AG04449 (cell line): ENCODE measurements at regions of chr3 and their contacts with region 1.

Region 1: DNA sequence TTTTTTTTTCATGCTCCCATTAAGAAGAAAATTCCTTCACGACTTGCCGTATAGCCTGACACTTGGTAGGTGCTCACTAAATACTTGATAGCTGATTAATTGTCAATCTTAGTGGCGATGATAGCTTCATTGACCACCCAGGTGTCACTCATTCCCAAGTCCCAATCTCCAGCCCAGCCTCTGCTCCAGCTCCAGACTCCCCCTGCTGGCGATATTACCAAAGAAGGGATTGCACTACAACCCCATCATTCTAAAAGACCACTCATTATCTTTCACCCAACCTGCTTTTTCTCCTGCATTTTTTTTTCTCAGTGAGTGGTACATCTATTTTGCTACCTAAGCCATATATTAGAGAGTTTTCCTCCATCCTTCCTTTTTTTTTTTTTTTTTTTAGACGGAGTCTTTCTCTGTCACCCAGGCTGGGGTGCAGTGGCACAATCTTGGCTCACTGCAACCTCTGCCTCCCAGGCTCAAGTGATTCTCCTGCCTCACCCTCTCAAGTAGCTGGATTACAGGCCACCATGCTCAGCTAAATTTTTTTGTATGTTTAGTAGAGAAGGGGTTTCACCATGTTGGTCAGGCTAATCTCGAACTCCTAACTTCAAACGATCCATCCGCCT is 19.5 kb upstream of the COMMD2 start:
- DNase-seq: no peak
- H3K4me3 ChIP-seq: no peak overlapping the region
- CTCF ChIP-seq: peak; percentile 72

Region 2: GRCh38 chr3:149104516-149104915 is 667.2 kb before region 1 on chr3:
- CTCF ChIA-PET with region 1: no interaction called
- POLR2A ChIA-PET with region 1: no interaction called
- DNase-seq: no peak
- H3K4me3 ChIP-seq: no peak overlapping the region
- CTCF ChIP-seq: no peak

Region 3: GRCh38 chr3:149487598-149488197 is 284.1 kb before region 1 on chr3:
- CTCF ChIA-PET with region 1: interaction called, 22 read pairs
- POLR2A ChIA-PET with region 1: no interaction called
- DNase-seq: no peak
- H3K4me3 ChIP-seq: no peak overlapping the region
- CTCF ChIP-seq: no peak

Region 4: DNA sequence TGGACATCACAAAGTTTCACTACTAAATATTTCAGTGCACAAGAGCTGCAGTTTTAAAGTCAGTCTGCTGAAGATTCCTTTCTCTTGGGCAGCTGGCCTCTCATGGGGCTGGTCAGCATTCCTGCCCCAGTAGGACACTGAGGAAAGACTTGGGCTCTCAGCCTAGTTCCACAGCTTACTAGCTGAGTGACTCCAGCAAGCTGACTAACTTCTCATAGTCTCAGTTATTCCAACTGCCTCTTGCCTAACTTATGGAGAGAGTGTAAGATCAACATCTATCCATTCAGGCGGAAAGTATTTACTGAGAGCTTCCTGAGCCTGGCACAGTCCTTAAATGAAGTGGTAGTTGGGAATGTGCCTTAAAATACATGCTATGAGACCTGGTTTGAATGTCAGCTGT is 270.2 kb before region 1 on chr3:
- CTCF ChIA-PET with region 1: interaction called, 14 read pairs
- POLR2A ChIA-PET with region 1: no interaction called
- DNase-seq: peak; percentile 89
- H3K4me3 ChIP-seq: no peak overlapping the region
- CTCF ChIP-seq: no peak

Region 5: DNA sequence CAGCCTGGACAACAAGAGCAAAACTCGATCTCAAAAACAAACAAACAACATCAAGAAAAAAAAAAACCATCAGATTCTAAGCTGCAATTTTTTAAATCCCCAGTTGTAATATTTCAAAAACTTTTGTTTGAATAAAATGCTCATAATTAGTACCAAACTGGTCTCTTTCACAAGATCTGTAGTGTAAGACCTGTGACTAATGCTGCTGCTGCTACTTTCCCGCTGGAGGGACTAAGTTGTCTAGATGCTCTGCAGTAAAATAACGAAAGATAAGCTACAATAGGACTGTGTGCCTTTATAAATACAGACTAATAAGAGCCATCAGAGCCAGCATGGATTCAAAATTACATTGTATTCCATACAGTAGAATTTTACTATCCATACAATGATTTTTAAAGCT is 251.8 kb before region 1 on chr3:
- CTCF ChIA-PET with region 1: interaction called, 92 read pairs
- POLR2A ChIA-PET with region 1: no interaction called
- DNase-seq: no peak
- H3K4me3 ChIP-seq: no peak overlapping the region
- CTCF ChIP-seq: no peak

Region 6: GRCh38 chr3:149575961-149576564 is 195.7 kb before region 1 on chr3:
- CTCF ChIA-PET with region 1: interaction called, 24 read pairs
- POLR2A ChIA-PET with region 1: no interaction called
- DNase-seq: peak; percentile 87
- H3K4me3 ChIP-seq: peak overlapping the region; percentile 31
- CTCF ChIP-seq: no peak

Region 7: GRCh38 chr3:149783576-149783975 is 11.8 kb after region 1 on chr3:
- CTCF ChIA-PET with region 1: interaction called, 63 read pairs
- POLR2A ChIA-PET with region 1: no interaction called
- DNase-seq: peak; percentile 59
- H3K4me3 ChIP-seq: no peak overlapping the region
- CTCF ChIP-seq: no peak

Region 8: GRCh38 chr3:150278843-150279381 is 507.1 kb after region 1 on chr3:
- CTCF ChIA-PET with region 1: no interaction called
- POLR2A ChIA-PET with region 1: no interaction called
- DNase-seq: no peak
- H3K4me3 ChIP-seq: no peak overlapping the region
- CTCF ChIP-seq: no peak